ENCODE measurements at regions of chr11 and their contacts with region 1.

Region 1: DNA sequence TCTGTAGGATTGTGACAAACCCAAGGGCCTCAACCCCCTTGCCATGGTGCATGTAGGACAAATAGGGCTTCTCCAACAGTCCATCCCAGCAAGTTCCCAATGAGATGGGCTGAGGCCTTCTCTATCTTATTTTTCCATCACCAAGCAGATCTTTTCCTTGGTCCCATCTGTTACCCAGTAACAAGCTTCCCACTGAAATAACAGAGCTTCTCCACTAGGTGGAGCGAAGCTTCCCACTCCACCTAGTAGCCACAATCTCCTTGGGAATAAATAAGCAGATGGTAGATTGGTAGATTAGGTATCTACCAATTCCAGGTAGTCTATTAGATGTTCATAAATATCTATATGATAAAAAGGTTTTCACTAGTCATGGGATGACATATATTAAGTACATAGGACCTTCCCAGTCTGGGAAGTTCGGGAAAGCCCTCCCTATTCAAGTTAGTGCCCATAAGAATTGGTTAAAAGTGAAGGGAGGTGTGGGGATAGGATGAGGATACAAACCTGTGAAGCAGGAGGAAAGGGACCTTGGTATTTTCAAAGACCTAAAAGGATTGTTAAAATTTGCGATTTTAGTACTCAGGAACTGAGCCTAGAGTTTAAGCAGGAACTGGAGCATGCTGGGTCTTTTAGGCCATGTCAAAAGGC is 5.9 kb upstream of the OR52L1 start:
- DNase-seq: peak; percentile 34

Region 2: DNA sequence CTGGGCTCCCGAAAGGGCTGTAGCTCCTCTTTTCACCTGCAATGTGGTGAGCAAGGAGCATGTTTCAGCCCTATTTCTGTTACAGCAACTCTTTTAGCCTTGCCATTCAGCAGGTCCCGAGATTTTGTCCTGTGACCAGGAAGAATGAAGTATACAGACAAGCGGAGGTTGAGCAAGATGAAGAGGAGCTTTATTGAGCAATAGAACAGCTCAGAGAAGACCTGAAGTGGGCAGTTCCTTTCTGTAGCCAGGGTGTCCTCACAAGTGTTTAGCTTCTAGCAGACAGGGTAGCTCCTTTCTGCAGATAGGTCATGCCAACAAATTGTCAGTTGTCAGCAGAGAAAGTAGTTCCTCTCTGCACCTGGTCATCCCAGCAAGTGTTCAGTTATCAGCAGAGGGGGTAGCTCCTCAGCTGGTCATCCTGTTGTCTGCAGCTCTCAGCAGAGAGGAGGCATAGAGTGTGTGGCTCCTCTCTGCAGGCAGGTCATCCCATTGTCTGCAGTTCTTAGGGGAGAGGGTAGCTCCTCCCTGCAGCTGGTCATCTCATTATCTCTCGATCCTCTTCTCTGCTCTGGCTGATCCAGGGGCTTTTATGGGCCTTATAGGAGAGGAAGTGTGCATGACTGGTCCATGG is 19.4 kb after region 1 on chr11:
- CTCF ChIA-PET with region 1: interaction called, 10 read pairs
- POLR2A ChIA-PET with region 1: no interaction called
- DNase-seq: no peak

Region 3: DNA sequence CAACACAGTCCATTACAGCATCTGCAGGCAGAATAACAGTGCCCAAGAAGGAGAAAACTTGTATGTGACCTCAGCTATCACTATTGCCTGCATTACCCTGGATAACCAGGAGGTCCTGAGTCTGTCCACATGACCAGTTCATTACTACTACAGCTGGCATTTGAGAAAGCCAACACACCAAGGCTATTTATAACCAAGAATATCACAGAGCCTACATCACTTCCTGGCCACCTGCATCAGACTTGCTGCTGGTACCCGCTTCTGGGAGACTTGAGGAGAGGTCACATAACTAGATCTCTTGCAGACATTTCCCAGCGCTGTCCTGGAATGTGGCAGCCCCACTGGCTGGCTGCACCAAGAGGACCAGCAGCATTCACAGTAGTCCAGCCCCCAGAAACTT is 103.7 kb after region 1 on chr11:
- CTCF ChIA-PET with region 1: no interaction called
- POLR2A ChIA-PET with region 1: no interaction called
- DNase-seq: no peak

Measured in HEK293T (cell line).